Activated B cell treated with CpG ODN at 0.5 μM for 24 hours (primary cell): ENCODE measurements at regions of chr12 and their contacts with region 1.

Region 1: GRCh38 chr12:6062757-6063735 is 61.4 kb downstream of the VWF start:
- DNase-seq: peak; percentile 41
- ATAC-seq: peak; percentile 71
- H3K4me3 Mint-ChIP-seq: no peak overlapping the region
- H3K27ac Mint-ChIP-seq: no peak overlapping the region
- H3K4me1 Mint-ChIP-seq: no peaks in the 10 kb centered on the region
- H3K27me3 Mint-ChIP-seq: peaks cover 22% of the 10 kb centered on the region
- CTCF ChIP-seq: no peak

Region 2: GRCh38 chr12:6278439-6279255 is 215.6 kb after region 1 on chr12:
- CTCF ChIA-PET with region 1: interaction called, 4 read pairs
- POLR2A ChIA-PET with region 1: no interaction called
- intact Hi-C with region 1: loop called (anchors 1 kb)
- DNase-seq: peak; percentile 95
- ATAC-seq: peak; percentile 98
- H3K4me3 Mint-ChIP-seq: peak overlapping the region; percentile 80
- H3K27ac Mint-ChIP-seq: no peak overlapping the region
- H3K4me1 Mint-ChIP-seq: peaks cover 6% of the 10 kb centered on the region
- H3K27me3 Mint-ChIP-seq: peaks cover 48% of the 10 kb centered on the region
- CTCF ChIP-seq: peak; percentile 71

Region 3: DNA sequence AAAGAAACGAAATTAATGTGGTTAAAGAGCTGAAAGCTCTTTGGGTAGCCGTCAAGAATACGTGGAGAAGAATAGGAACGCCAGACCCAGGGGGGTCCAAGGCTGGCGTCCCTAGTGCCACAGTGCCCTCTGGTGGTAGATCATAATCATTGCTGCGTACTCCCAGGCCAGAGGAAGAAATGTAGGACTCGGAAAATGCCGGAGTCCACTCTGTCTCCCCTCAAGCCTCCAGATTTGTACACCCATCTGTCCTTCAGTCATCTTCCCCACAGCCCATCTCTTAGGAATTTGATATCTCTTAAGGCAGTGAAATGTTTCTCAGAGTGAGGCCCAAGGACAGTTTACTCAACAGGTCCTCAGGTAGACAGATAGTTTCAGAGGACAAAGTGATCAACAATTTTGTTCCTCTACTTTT is 222.0 kb after region 1 on chr12:
- CTCF ChIA-PET with region 1: interaction called, 3 read pairs
- POLR2A ChIA-PET with region 1: no interaction called
- intact Hi-C with region 1: loop called (anchors 1 kb)
- DNase-seq: no peak
- ATAC-seq: peak; percentile 81
- H3K4me3 Mint-ChIP-seq: no peak overlapping the region
- H3K27ac Mint-ChIP-seq: no peak overlapping the region
- H3K4me1 Mint-ChIP-seq: no peaks in the 10 kb centered on the region
- H3K27me3 Mint-ChIP-seq: peaks cover 41% of the 10 kb centered on the region
- CTCF ChIP-seq: peak; percentile 79